Activated T-helper 1 cell treated with anti-CD3 and anti-CD28 coated beads, Interleukin-12 subunit alpha, Interleukin-12 subunit beta, Interleukin-2, Interleukin-4 antibody, amounts not matched to agents 30 ng/mL and 10 ng/mL and 1 ng/mL, durations not matched to agents 14 hours and 24 hours and 36 hours (primary cell): ENCODE measurements at regions of chr12 and their contacts with region 1.

Region 1: DNA sequence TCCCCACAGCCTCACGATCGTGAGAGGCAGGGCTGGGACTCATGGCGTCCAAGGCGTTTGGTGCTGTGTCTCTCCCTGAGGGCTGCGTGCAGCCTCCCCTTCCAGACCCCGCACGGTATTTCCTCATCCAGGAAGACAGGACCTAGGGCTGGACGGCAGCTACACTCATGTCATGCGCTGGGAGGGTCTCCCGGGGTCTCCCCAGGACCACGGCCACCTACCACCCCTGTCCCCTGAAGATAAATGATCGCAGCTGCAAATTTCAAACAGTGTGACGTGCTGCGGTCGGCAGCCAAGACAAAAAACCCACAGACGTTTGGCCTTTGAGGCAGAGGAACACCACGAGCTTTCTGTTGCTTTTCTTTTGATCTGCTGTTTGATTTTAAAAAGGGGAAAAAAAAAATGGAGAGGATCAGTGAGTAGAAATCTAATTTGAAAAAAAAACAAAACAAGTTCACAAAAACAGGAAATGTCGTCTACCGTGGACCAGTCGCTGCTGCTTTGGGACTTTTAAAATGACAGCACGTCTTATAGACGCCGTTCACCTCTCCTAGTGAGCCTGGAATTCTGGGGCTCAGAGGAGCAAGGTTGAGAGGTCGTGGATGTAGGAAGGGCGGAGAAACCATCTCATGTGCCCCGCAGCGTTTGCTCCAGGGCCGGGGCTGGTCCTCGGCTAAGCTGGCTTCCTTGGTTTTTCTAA is 237.6 kb downstream of the SLC41A2 start:
- DNase-seq: peak; percentile 69
- H3K4me3 Mint-ChIP-seq: peak overlapping the region; percentile 81
- H3K27ac Mint-ChIP-seq: peak overlapping the region; percentile 94
- H3K4me1 Mint-ChIP-seq: peaks cover 78% of the 10 kb centered on the region
- H3K27me3 Mint-ChIP-seq: no peaks in the 10 kb centered on the region

Region 2: DNA sequence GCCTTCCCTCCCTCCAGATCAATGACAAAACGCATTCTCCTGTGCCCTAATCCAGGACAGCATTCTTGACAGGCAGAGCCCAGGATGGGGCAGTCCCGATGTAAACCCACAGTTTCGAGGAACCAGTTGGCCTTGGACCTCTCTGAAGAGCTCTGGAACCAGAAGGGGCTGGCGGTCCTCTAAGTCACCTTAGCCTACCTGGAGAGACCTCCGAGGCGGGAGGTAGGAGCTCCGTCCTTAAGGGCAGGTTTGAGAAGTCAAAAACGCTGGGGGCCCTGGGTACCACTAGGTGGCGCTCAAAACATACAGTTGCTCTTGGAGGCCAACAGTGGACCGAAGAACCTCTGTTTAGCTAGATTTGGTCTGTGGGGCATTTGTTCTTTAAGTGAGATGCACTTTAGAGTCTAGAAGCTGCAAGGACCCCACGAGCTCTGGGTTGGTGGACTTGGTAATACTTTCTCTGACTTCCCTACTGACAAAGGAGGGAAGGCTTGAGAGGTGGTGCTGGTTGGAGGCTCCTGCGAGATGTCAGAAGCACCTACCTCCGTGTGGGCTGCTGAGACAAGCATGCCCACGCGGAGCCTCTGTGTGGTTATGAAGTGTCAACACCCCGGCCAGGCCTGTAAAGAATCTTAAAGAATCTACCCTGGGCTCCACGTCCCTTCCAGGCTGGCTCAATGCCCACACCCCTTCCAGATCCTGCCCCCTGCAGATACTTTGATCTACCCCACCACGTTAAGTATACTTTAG is 338.6 kb before region 1 on chr12:
- intact Hi-C with region 1: loop called (anchors 1 kb)
- DNase-seq: peak; percentile 69
- H3K4me3 Mint-ChIP-seq: peak overlapping the region; percentile 52
- H3K27ac Mint-ChIP-seq: peak overlapping the region; percentile 33
- H3K4me1 Mint-ChIP-seq: peaks cover 20% of the 10 kb centered on the region
- H3K27me3 Mint-ChIP-seq: peaks cover 2% of the 10 kb centered on the region

Region 3: DNA sequence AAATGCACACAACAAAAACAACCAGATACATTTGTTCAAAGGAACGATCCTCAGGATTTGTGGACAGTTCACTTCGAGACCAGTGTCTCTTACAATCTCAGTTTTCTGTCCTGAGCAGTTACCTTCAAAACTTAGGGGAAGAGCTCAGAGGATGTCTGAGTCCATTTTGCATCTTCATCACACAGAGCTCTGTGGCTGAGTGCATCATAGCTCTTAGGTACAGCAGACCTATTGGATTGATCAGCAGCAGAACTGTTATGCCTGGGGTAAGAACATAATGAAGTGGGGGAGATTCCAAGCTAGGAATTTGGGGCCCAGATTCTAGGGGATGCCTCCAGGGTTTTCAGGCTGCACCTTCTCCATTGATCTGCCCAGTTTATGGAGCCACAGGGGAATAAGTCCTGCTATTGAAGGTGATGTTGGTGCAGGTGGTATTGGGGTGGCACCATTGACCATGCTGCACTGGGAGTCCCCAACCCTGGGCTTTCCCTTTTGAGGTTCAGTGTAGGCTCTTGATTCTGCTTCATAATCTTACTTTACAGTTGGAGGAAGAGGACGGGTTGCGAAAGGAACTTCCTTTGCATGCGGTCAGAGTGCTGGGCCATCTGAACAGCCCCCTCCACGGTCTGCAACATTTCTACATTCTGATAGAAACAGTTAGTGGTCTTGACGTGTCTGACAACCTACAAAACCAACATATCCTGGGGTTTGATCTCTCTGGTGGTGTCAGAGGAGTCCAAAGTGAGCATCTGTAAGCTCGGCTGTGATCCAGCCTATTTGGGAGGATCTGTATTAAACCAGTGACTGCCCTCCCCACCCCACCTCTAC is 150.9 kb before region 1 on chr12:
- intact Hi-C with region 1: loop called (anchors 1 kb)
- DNase-seq: peak; percentile 58
- H3K4me3 Mint-ChIP-seq: peak overlapping the region; percentile 64
- H3K27ac Mint-ChIP-seq: peak overlapping the region; percentile 89
- H3K4me1 Mint-ChIP-seq: peaks cover 63% of the 10 kb centered on the region
- H3K27me3 Mint-ChIP-seq: no peaks in the 10 kb centered on the region

Region 4: GRCh38 chr12:104740668-104741067 is 20.2 kb after region 1 on chr12:
- intact Hi-C with region 1: loop called (anchors 2 kb)
- DNase-seq: peak; percentile 40
- H3K4me3 Mint-ChIP-seq: peak overlapping the region; percentile 71
- H3K27ac Mint-ChIP-seq: peak overlapping the region; percentile 82
- H3K4me1 Mint-ChIP-seq: peaks cover 75% of the 10 kb centered on the region
- H3K27me3 Mint-ChIP-seq: no peaks in the 10 kb centered on the region

Region 5: GRCh38 chr12:104790296-104791125 is 70.0 kb after region 1 on chr12:
- intact Hi-C with region 1: loop called (anchors 2 kb)
- DNase-seq: peak; percentile 12
- H3K4me3 Mint-ChIP-seq: no peak overlapping the region
- H3K27ac Mint-ChIP-seq: no peak overlapping the region
- H3K4me1 Mint-ChIP-seq: peaks cover 8% of the 10 kb centered on the region
- H3K27me3 Mint-ChIP-seq: peaks cover 2% of the 10 kb centered on the region

Region 6: GRCh38 chr12:104865080-104865479 is 144.6 kb after region 1 on chr12:
- intact Hi-C with region 1: no loop called
- DNase-seq: no peak
- H3K4me3 Mint-ChIP-seq: no peak overlapping the region
- H3K27ac Mint-ChIP-seq: no peak overlapping the region
- H3K4me1 Mint-ChIP-seq: peaks cover 14% of the 10 kb centered on the region
- H3K27me3 Mint-ChIP-seq: peaks cover 3% of the 10 kb centered on the region

Region 7: DNA sequence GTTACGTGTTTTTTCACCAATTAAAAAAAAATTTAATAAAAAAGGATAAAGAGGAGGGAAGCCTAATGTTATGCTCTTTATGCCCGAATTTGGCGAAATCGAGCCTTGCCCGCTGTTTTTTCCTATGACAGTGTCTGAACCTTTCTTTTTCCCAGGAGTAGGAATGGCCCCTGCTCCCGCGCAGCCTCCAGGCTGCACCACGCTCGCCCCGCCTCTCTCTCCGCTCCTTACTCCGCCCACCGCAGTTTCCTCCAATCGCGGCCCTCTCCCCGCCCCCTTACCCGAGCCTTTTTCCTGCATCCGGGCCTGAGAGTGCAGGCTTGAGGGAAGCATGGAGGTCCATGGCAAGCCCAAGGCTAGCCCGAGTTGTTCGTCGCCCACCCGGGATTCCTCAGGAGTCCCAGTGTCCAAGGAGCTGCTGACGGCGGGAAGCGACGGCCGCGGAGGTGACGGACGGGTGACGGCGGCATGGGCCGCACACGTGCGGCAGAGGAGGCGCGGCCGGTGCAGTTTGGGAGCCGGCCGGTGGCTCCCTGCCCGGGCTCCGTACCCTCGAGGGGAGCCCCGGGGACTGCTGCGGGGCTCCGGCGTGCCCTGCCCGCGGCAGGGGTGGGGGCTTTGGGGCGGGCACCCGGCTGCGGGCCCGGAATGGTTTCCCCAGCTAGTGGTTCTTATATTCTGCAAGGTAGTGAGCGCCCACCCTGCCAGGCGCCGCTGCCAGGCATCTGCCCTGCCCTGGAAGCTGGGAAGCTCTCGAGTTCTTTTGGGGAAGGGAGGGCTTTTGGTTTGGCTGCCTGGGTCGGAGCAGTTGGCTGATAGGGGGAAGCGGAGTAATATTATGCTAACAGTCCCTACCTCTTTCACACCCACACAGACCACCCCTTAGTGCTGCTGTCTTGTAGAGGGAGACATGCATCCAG is 265.8 kb after region 1 on chr12 and contains the start of gene NOPCHAP1:
- intact Hi-C with region 1: loop called (anchors 5 kb)
- DNase-seq: peak; percentile 83
- H3K4me3 Mint-ChIP-seq: peak within 1 kb of the TSS; percentile 89
- H3K27ac Mint-ChIP-seq: peak within 1 kb of the TSS; percentile 57
- H3K4me1 Mint-ChIP-seq: peaks cover 44% of the 10 kb centered on the region
- H3K27me3 Mint-ChIP-seq: peaks cover 3% of the 10 kb centered on the region
- total RNA-seq, gene NOPCHAP1: 28.0 and 40.0 TPM in 2 replicates